ENCODE measurements at regions of chr6 and their contacts with region 1.

Region 1: DNA sequence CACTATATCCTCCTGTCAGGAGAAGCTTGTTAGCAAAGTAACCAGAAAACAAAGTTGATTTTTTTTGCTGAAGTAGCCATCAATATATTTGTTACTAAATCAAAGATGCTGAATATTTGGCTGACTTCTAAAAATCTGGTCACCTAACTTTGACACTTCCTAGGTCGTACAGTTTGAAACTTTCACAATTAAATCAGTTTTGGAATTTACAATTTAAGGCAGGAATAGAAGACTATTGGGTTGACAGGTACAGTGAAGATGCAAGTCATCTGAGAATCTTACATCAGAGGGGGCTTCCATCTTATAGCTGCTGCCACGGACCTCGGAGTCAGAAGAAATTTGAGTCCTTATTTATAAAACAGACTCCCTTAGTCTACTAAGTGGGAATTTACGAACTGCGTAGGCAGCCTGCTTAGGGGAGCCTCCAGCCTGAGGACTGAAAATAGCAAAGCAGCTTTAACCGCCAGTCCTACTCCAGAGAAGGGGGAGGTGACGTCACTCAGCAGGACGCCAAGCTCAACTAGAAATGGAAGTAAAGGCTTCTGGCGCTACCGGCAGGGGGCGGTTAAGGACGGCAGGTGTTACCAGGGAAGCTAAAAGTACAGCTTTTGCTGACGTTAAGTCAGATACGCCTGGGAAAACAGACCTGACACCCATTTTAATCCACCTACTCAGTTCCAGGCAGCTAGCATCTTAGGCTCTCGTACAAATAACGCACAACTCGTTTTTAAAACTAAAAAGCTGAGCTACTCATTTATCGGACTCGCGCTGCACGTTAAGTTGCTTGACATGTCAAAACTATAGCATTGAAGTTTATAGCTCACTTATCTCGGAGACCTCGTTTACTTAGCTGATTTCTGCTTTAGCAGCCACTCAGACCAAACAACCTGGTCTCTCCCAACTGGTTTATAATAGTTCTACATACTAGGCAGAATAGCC is 61.1 kb upstream of the HFE start:
- DNase-seq: peak; percentile 83 to 98 (median 94)
- ATAC-seq: peak; percentile 45 to 47
- H3K4me3 Mint-ChIP-seq: peak overlapping the region; percentile 84 to 99 (median 92)
- H3K27ac Mint-ChIP-seq: peak overlapping the region; percentile 96 to 100 (median 99)
- H3K4me1 Mint-ChIP-seq: peaks cover 19 to 47% (median 38%) of the 10 kb centered on the region in 4 donors
- H3K27me3 Mint-ChIP-seq: peaks cover 0 to 2% (median 0%) of the 10 kb centered on the region in 5 donors

Region 2: GRCh38 chr6:25975923-25976560 is 50.1 kb before region 1 on chr6:
- POLR2A ChIA-PET with region 1: no interaction called
- DNase-seq: no peak
- ATAC-seq: no peak
- H3K4me3 Mint-ChIP-seq: no peak overlapping the region
- H3K27ac Mint-ChIP-seq: peak overlapping the region in 6 of 10 donors; percentile 6 to 51 (median 44)
- H3K4me1 Mint-ChIP-seq: peaks cover 11 to 30% (median 22%) of the 10 kb centered on the region in 4 donors
- H3K27me3 Mint-ChIP-seq: no peaks in the 10 kb centered on the region

Region 3: DNA sequence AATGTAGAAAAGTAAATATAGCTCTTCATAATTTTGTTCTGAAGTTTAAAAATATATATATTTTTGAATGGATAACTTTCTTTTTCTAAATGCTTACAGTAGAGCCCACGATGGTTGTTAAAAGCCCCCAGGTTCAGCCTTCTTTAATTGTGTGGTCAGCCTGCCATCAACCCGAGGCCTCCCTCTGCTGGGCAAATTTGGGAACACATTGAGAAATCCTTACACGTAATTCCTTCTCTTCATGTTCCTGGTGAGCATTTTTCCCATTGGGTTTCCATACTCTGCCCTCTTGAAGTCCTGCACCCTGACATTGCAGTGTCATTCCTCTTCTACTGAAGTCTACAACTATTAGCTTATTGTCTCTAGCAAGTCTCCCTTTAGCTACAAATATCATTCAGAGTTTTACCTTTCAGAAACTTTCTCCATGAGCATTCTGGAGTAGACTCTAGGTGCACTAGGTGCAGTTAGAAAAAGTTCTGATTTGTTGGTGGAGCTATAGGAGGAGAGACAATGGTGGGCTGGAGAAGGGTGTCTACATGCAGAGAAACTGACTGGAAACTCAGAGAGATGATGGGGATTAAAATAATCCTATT is 23.0 kb before region 1 on chr6:
- POLR2A ChIA-PET with region 1: interaction called, 16 read pairs
- DNase-seq: peak; percentile 15 to 72 (median 42)
- ATAC-seq: peak; percentile 54 to 58
- H3K4me3 Mint-ChIP-seq: no peak overlapping the region
- H3K27ac Mint-ChIP-seq: no peak overlapping the region
- H3K4me1 Mint-ChIP-seq: peaks cover 0 to 8% (median 4%) of the 10 kb centered on the region in 4 donors
- H3K27me3 Mint-ChIP-seq: no peaks in the 10 kb centered on the region

Region 4: GRCh38 chr6:26065952-26066380 is 39.8 kb after region 1 on chr6:
- POLR2A ChIA-PET with region 1: interaction called, 12 read pairs
- DNase-seq: peak in 8 of 10 donors; percentile 43 to 74 (median 66)
- ATAC-seq: peak; percentile 93 to 97
- H3K4me3 Mint-ChIP-seq: no peak overlapping the region
- H3K27ac Mint-ChIP-seq: no peak overlapping the region
- H3K4me1 Mint-ChIP-seq: peaks cover 2 to 10% (median 6%) of the 10 kb centered on the region in 4 donors
- H3K27me3 Mint-ChIP-seq: no peaks in the 10 kb centered on the region

Region 5: DNA sequence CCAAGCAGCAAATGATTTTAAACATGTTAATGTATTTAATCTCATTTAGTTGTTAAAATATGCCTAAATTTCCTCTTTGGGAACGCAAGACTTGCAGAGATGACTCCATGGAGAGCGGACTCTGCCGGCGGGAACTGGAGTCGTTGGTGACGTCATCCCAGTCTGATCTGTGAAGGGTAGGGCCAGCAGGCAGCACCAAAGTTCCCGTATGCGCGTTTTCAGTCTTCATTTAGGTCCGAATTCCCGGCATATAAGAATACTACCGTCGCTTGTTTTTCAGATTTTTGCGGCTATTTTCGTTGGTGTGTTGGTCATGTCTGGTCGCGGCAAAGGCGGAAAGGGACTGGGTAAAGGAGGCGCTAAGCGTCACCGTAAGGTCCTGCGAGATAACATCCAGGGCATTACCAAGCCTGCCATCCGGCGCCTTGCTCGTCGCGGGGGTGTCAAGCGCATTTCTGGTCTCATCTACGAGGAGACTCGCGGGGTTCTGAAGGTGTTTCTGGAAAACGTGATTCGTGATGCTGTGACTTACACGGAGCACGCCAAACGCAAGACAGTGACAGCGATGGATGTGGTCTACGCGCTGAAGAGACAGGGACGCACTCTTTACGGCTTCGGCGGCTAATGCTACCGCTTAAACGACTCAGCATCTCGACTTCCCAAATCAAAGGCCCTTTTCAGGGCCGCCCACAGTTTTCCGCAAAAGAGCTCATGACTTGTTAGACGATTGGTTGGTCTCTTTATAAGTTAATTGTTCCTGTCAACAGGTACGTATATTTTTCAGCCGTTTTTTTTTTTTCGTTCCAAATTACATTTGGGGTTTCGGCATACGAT is 178.4 kb after region 1 on chr6:
- POLR2A ChIA-PET with region 1: interaction called, 56 read pairs
- DNase-seq: peak; percentile 69 to 97 (median 88)
- ATAC-seq: peak; percentile 68 to 71
- H3K4me3 Mint-ChIP-seq: no peak overlapping the region
- H3K27ac Mint-ChIP-seq: no peak overlapping the region
- H3K4me1 Mint-ChIP-seq: peaks cover 14 to 36% (median 26%) of the 10 kb centered on the region in 4 donors
- H3K27me3 Mint-ChIP-seq: peaks cover 0 to 4% (median 0%) of the 10 kb centered on the region in 5 donors

Region 6: DNA sequence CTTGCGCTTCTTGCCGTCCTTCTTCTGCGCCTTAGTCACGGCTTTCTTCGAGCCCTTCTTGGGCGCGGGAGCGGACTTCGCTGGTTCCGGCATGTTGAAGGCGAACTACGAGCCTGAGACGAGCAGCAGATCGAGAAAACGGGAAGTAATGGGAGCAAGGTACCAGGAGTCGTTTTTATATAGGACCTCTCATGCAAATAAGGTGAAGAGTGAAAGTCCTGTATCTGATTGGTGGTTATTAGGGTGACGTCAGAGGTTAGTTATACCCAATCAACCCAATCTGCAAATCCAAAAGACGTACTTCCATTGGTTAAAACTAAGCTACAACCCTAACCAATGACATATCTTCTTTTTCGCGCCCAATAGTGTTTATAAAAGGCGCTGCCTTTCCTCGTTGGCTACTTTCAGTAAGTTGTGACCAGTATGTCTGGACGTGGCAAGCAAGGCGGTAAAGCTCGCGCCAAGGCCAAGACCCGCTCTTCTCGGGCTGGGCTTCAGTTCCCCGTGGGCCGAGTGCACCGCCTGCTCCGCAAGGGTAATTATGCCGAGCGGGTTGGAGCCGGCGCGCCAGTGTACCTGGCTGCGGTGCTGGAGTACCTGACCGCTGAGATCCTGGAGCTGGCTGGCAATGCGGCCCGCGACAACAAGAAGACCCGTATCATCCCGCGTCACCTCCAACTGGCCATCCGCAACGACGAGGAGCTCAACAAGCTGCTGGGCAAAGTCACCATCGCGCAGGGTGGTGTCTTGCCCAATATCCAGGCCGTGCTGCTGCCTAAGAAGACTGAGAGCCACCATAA is 1120.7 kb after region 1 on chr6:
- POLR2A ChIA-PET with region 1: interaction called, 20 read pairs
- DNase-seq: peak; percentile 37 to 94 (median 82)
- ATAC-seq: peak; percentile 85 to 88
- H3K4me3 Mint-ChIP-seq: no peak overlapping the region
- H3K27ac Mint-ChIP-seq: no peak overlapping the region
- H3K4me1 Mint-ChIP-seq: peaks cover 3 to 25% (median 12%) of the 10 kb centered on the region in 4 donors
- H3K27me3 Mint-ChIP-seq: no peaks in the 10 kb centered on the region

Region 7: GRCh38 chr6:27871924-27872638 is 1845.9 kb after region 1 on chr6:
- POLR2A ChIA-PET with region 1: interaction called, 25 read pairs
- DNase-seq: peak; percentile 57 to 99 (median 91)
- ATAC-seq: peak; percentile 78 to 79
- H3K4me3 Mint-ChIP-seq: peak overlapping the region; percentile 86 to 95 (median 92)
- H3K27ac Mint-ChIP-seq: peak overlapping the region; percentile 89 to 99 (median 96)
- H3K4me1 Mint-ChIP-seq: peaks cover 21 to 46% (median 38%) of the 10 kb centered on the region in 4 donors
- H3K27me3 Mint-ChIP-seq: no peaks in the 10 kb centered on the region

Measured in naive thymus-derived CD8-positive, alpha-beta T cell (primary cell).